ENCODE measurements at regions of chr6 and their contacts with region 1.

Region 1: DNA sequence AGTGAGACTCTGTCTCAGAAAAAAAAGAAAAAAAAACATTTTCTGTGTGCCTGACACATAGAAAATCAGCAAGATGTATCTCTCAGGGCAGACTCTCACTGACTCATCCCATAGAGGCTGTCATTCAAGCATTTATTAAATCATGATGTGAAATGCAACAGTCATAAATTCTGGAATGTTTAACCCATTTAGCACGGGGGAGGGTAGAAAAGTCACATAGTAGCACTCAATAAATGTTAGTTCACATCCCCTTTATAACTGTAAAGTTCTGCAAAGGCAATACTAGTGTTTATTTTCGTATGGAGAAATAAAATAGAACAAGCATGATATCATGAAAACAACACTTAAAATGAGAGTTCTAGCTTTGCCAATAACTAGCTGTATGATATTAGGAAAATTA is 15.5 kb upstream of the CARMIL1 start:
- DNase-seq: no peak
- H3K4me3 Mint-ChIP-seq: no peak overlapping the region
- H3K27ac Mint-ChIP-seq: no peak overlapping the region
- H3K4me1 Mint-ChIP-seq: peaks cover 2% of the 10 kb centered on the region
- H3K27me3 Mint-ChIP-seq: no peaks in the 10 kb centered on the region

Region 2: DNA sequence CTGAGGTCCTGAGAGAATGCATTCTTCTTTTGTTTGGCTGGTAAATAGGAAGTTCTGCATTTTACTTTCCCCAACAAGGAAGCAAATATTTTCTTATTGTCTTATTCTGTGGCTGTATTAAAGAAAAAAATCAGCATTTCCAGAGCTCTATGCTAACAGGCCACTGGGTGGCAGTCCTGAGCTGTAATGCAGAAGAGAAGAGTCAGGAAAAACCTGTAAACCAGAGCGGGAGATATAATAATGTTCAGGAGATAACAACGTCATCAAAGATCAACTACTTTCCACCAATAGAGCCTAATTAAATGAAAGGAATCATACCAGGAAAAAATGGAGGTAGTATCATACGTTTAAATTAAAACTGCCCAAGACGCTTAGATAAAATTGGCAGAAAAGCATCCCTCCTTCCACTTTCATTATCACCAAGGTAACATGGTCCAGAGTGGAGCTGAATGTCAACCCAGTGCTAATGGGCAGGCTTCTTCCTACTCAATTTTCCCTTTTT is 40.1 kb before region 1 on chr6:
- CTCF ChIA-PET with region 1: interaction called, 11 read pairs
- intact Hi-C with region 1: loop called (anchors 1 kb)
- DNase-seq: peak; percentile 80
- H3K4me3 Mint-ChIP-seq: peak overlapping the region; percentile 47
- H3K27ac Mint-ChIP-seq: no peak overlapping the region
- H3K4me1 Mint-ChIP-seq: peaks cover 8% of the 10 kb centered on the region
- H3K27me3 Mint-ChIP-seq: peaks cover 2% of the 10 kb centered on the region

Region 3: GRCh38 chr6:25250878-25251277 is 12.8 kb before region 1 on chr6:
- CTCF ChIA-PET with region 1: interaction called, 28 read pairs
- intact Hi-C with region 1: no loop called
- DNase-seq: peak; percentile 76
- H3K4me3 Mint-ChIP-seq: no peak overlapping the region
- H3K27ac Mint-ChIP-seq: peak overlapping the region; percentile 62
- H3K4me1 Mint-ChIP-seq: peaks cover 12% of the 10 kb centered on the region
- H3K27me3 Mint-ChIP-seq: no peaks in the 10 kb centered on the region

Region 4: GRCh38 chr6:25278914-25279747 is 15.5 kb after region 1 on chr6 and contains the start of gene CARMIL1:
- CTCF ChIA-PET with region 1: interaction called, 32 read pairs
- intact Hi-C with region 1: no loop called
- DNase-seq: peak; percentile 76
- H3K4me3 Mint-ChIP-seq: peak within 1 kb of the TSS; percentile 83
- H3K27ac Mint-ChIP-seq: peak within 1 kb of the TSS; percentile 60
- H3K4me1 Mint-ChIP-seq: peaks cover 29% of the 10 kb centered on the region
- H3K27me3 Mint-ChIP-seq: no peaks in the 10 kb centered on the region
- total RNA-seq, gene CARMIL1: 3.9 to 4.0 TPM

Region 5: GRCh38 chr6:25316626-25317025 is 53.0 kb after region 1 on chr6:
- CTCF ChIA-PET with region 1: no interaction called
- intact Hi-C with region 1: no loop called
- DNase-seq: no peak
- H3K4me3 Mint-ChIP-seq: no peak overlapping the region
- H3K27ac Mint-ChIP-seq: no peak overlapping the region
- H3K4me1 Mint-ChIP-seq: peaks cover 19% of the 10 kb centered on the region
- H3K27me3 Mint-ChIP-seq: no peaks in the 10 kb centered on the region

Region 6: GRCh38 chr6:25519856-25520255 is 256.2 kb after region 1 on chr6:
- CTCF ChIA-PET with region 1: interaction called, 19 read pairs
- intact Hi-C with region 1: no loop called
- DNase-seq: no peak
- H3K4me3 Mint-ChIP-seq: no peak overlapping the region
- H3K27ac Mint-ChIP-seq: no peak overlapping the region
- H3K4me1 Mint-ChIP-seq: no peaks in the 10 kb centered on the region
- H3K27me3 Mint-ChIP-seq: no peaks in the 10 kb centered on the region

Region 7: GRCh38 chr6:25556516-25556915 is 292.9 kb after region 1 on chr6:
- CTCF ChIA-PET with region 1: interaction called, 43 read pairs
- intact Hi-C with region 1: loop called (anchors 1 kb)
- DNase-seq: peak; percentile 92
- H3K4me3 Mint-ChIP-seq: no peak overlapping the region
- H3K27ac Mint-ChIP-seq: no peak overlapping the region
- H3K4me1 Mint-ChIP-seq: no peaks in the 10 kb centered on the region
- H3K27me3 Mint-ChIP-seq: no peaks in the 10 kb centered on the region

Region 8: DNA sequence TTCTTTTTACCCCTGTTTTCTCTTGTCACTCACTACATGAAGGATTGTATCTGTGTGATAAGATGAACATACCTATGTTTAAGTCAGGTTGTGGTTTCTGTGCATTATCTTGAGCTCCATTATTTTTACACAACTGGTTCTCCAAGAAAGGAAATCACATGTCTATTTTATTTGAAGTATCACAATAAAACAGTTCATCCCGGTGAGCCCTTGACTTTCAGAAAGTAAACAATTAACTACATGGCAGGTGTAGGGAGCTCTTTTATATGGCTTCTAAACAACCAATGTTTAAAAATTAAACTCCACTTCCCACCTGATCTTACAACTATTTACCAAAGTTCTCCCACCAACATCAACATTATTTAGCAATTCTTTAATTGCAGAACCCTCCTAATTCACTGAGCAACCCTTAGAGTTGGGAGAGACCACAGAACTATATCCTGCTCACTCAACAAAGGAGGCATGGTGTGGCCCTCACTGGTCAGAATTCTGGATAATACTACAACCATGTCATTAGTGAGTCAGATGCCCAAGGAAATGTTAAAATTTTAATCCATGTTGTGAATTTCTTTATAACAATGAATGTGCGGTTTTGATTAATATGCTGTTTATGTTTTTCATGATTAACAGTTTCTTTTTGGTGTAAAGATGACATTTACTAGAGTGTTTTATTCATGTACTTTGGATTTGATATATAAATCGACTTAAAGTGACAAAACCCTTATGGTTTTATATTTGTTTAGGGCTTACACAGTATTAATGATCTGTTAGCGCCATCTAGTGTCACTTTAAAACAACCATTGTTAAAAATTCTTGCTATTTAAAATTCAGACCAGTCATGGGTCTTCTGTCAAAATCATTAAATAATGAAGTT is 338.4 kb after region 1 on chr6:
- CTCF ChIA-PET with region 1: interaction called, 7 read pairs
- intact Hi-C with region 1: loop called (anchors 1 kb)
- DNase-seq: no peak
- H3K4me3 Mint-ChIP-seq: no peak overlapping the region
- H3K27ac Mint-ChIP-seq: no peak overlapping the region
- H3K4me1 Mint-ChIP-seq: peaks cover 6% of the 10 kb centered on the region
- H3K27me3 Mint-ChIP-seq: no peaks in the 10 kb centered on the region

Region 9: DNA sequence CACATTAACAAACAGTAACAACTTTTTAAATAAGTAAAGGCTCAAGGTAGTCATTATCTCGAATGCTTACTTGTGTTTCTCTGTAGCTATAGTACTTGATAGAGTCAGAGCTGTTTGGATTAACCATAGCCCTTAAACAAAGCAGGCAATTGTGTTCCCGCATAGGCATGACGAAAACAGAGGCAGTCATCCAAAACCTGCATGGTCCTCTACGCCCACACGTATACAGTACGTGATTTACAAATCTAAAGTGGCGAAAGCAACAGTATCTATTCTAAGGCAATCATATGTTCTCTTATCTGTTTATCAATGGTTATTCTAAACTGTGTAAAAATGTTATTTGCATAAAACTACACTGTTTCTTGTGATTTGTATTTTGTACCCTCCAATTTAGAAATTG is 855.3 kb after region 1 on chr6:
- CTCF ChIA-PET with region 1: no interaction called
- intact Hi-C with region 1: no loop called
- DNase-seq: no peak
- H3K4me3 Mint-ChIP-seq: no peak overlapping the region
- H3K27ac Mint-ChIP-seq: no peak overlapping the region
- H3K4me1 Mint-ChIP-seq: peaks cover 31% of the 10 kb centered on the region
- H3K27me3 Mint-ChIP-seq: peaks cover 6% of the 10 kb centered on the region